ENCODE measurements at regions of chr1 and their contacts with region 1.

Region 1: GRCh38 chr1:117605774-117606648 is at the start of gene TENT5C:
- DNase-seq: peak; percentile 98 to 99
- ATAC-seq: peak; percentile 98
- H3K4me3 ChIP-seq: peak within 1 kb of the TSS; percentile 67 to 74
- H3K27ac ChIP-seq: peak within 1 kb of the TSS in 1 of 2 donors; percentile 83
- H3K4me1 ChIP-seq: no peaks in the 10 kb centered on the region
- H3K27me3 ChIP-seq: no peaks in the 10 kb centered on the region
- total RNA-seq, gene TENT5C: 6.8 to 17.7 TPM

Region 2: DNA sequence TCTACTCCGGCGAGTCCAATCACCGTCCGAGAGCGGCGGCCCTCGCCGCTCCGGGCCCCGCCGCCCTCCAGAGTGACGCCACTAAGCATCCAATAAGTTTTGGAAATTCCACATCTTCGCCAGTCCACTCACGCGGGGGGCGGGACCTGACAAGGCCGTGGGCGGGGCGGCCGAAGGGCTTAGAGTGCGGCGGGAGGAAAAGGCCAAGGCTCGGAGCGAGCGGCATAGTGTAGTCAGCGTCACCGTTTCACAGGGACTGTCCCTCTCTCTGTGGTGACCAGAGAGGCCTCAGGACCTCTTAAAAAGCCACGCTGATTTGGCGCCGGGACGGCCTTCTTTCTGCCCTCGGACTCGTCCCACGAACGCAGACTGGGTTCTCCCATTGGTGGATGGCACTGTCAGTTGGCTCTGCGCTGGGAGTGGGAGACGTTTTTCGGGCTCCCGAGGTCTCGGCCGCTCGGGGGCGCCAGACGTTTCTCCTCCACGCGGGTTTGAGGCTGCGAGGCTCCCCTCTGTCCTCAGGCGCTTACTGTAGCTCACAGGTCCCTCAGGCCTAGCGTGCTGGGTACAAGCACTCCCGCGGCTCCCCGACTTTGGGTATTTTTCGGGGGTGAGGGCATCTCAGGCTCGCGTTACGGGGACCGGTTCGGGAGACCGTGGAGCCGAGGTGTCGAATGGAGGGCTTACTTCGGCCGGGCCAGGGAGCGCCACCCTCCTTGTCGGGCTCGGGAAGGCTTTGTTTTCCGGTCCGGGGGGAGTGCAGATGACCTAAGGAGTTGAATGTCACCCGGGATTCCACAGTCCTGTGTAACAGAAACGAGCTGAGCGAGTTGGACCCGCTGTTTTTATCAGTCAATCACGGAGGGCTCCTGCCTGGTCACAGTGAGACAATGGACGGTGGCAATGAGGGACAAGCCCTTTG is 484.0 kb before region 1 on chr1:
- intact Hi-C with region 1: loop called in 1 of 2 experiments (anchors 5 kb)
- DNase-seq: peak; percentile 98 to 99
- ATAC-seq: peak; percentile 98
- H3K4me3 ChIP-seq: peak overlapping the region; percentile 48 to 61
- H3K27ac ChIP-seq: peak overlapping the region in 1 of 2 donors; percentile 78
- H3K4me1 ChIP-seq: no peaks in the 10 kb centered on the region
- H3K27me3 ChIP-seq: no peaks in the 10 kb centered on the region

Region 3: DNA sequence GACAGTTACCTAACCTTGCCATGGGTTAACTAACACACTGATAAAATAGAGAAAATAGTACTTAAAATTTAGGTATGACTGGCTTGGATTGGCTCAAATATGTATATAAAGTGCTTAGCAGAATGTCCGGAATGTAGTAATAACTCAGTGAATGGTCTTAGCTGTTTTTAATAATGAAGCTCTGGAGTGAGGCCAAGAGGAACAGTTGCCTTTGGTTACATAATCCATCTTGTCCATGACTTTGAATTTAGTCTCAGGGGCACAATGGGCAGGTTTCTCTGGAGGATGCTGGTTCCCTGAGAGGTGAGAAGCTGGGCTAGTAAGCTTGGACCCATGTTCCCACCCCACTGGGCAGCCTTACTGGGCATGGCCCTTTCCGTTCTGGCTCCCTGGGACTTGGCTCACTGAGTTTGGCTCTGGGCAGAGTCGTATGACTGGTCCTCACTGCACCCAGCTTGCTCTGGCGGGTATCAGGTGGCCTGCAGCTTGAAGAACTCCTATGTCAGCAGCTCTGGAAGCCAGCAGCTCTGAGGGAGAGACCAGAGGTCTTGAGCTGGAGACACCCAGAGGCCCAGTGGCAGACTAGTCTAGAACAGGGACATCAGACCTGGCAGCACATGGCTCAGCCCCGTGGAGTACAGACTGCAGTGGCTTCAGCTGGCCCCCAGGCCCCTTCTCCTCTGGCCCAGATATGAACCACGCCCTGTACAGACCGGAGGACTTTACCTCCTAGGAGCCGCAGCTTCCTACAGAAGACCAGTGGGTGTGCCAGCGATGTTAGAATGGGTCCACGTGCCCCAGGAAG is 40.2 kb after region 1 on chr1:
- intact Hi-C with region 1: loop called in 1 of 2 experiments (anchors 1 kb)
- DNase-seq: no peak
- ATAC-seq: peak; percentile 45
- H3K4me3 ChIP-seq: no peak overlapping the region
- H3K27ac ChIP-seq: no peak overlapping the region
- H3K4me1 ChIP-seq: no peaks in the 10 kb centered on the region
- H3K27me3 ChIP-seq: no peaks in the 10 kb centered on the region

Region 4: DNA sequence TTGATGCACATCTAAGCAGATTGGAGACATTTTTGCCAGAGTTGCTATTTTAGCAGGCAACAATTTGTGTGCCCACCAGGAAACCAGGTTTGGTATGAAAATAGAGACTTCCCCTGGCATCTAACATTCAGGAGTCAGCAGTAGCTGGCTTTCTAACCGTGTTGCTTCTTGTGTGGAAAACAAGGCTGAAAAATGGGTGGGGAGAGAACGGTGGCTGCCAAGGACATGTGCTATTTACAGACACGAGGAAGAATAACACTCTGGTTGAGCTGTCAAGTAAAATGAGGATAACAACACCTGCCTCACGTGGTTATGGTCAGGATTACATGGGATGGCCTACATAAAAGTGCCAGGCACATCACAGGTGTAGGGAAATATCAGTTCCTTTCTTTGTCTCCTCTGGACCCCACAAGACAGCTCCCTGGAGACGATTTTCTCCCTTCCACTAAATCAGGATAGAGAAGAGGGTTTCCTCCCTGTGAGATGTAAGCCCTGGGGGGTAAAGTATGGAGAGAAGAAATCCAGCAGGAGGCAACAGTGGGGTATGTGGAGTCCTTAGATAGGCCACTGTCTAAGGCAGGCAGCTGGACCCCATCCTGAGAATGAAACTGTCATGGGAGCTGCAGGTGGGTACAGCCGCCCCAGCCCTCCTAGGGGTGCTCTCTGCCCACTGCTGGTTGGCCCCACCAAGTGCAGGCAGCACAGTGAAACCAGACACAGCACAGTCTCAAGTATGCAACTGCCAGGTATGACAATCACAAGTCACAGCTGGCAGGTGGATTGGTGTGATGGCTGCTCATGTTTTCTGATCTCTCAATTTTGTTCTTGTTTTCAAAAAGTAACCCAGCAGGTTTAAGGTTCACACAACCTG is 80.2 kb after region 1 on chr1:
- intact Hi-C with region 1: loop called (anchors 5 kb)
- DNase-seq: no peak
- ATAC-seq: no peak
- H3K4me3 ChIP-seq: no peak overlapping the region
- H3K27ac ChIP-seq: peak overlapping the region in 1 of 2 donors; percentile 32
- H3K4me1 ChIP-seq: no peaks in the 10 kb centered on the region
- H3K27me3 ChIP-seq: no peaks in the 10 kb centered on the region

Region 5: GRCh38 chr1:117695796-117696490 is 89.9 kb after region 1 on chr1:
- intact Hi-C with region 1: loop called (anchors 5 kb)
- DNase-seq: peak in 1 of 2 donors; percentile 74
- ATAC-seq: peak; percentile 92
- H3K4me3 ChIP-seq: peak overlapping the region in 1 of 2 donors; percentile 37
- H3K27ac ChIP-seq: peak overlapping the region; percentile 99 to 100
- H3K4me1 ChIP-seq: peaks cover 0 to 14% of the 10 kb centered on the region in 2 donors
- H3K27me3 ChIP-seq: no peaks in the 10 kb centered on the region

Region 6: DNA sequence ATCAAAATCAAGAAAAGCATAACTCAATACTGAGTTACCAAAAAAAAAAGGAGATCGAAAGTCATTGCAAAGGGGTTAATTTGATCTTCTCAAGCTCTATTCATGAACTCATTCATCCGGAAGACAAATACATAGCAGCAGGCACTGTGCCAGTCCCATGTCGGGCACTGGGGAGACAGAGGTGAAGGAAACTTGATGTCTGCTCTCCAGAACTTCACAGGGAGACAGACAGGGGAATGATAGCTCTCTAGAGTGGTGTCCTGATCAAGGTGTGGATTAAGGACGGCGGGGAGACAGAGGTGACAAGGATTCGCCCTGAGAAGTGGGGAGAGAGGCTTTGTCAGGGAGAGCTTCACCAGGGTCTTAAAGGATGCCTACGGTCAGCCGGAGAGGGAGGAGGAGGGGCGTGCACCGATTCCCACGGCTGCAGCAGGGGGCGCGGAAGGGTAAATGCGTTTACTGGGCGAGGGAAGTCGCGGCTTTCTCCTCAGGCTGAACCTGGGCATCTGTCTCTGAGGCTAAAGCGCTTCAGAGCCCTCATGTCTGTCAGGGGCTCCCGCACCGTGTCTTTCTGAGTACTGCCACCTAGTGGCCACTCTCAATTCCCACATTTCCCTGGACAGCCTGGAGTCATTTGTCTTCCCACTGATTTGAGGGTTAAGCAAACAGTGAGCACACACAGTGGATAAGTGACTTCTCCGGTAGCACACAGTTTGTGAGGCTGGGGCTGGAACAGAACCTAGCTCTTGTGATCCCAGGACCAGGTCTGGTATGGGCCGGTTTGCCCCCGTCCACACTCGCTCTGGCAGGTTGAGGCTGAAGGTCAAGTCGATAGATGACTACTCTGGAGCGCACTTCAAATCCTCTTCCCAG is 152.7 kb after region 1 on chr1:
- intact Hi-C with region 1: loop called (anchors 5 kb)
- DNase-seq: peak; percentile 75 to 83
- ATAC-seq: peak; percentile 92
- H3K4me3 ChIP-seq: peak overlapping the region in 1 of 2 donors; percentile 12
- H3K27ac ChIP-seq: no peak overlapping the region
- H3K4me1 ChIP-seq: peaks cover 0 to under 1% of the 10 kb centered on the region in 2 donors
- H3K27me3 ChIP-seq: no peaks in the 10 kb centered on the region

Region 7: GRCh38 chr1:117895482-117896114 is 289.6 kb after region 1 on chr1:
- intact Hi-C with region 1: loop called (anchors 10 kb)
- DNase-seq: peak in 1 of 2 donors; percentile 59
- ATAC-seq: peak; percentile 84
- H3K4me3 ChIP-seq: no peak overlapping the region
- H3K27ac ChIP-seq: no peak overlapping the region
- H3K4me1 ChIP-seq: no peaks in the 10 kb centered on the region
- H3K27me3 ChIP-seq: no peaks in the 10 kb centered on the region

Measured in aorta (tissue), 5 donors.